ENCODE measurements at regions of chr4 and their contacts with region 1.

Region 1: GRCh38 chr4:15681207-15682015 is at the start of gene FAM200B:
- DNase-seq: peak; percentile 99
- H3K4me3 Mint-ChIP-seq: peak within 1 kb of the TSS; percentile 99
- H3K27ac Mint-ChIP-seq: peak within 1 kb of the TSS; percentile 95
- H3K4me1 Mint-ChIP-seq: peaks cover 29% of the 10 kb centered on the region
- H3K27me3 Mint-ChIP-seq: no peaks in the 10 kb centered on the region
- total RNA-seq, gene FAM200B: 8.3 to 8.9 TPM

Region 2: GRCh38 chr4:15702941-15703403 is 21.6 kb after region 1 on chr4 and contains the start of gene BST1:
- CTCF ChIA-PET with region 1: interaction called, 3 read pairs
- POLR2A ChIA-PET with region 1: no interaction called
- intact Hi-C with region 1: loop called (anchors 1 kb)
- DNase-seq: peak; percentile 67
- H3K4me3 Mint-ChIP-seq: peak within 1 kb of the TSS; percentile 77
- H3K27ac Mint-ChIP-seq: no peak within 1 kb of the TSS
- H3K4me1 Mint-ChIP-seq: peaks cover 7% of the 10 kb centered on the region
- H3K27me3 Mint-ChIP-seq: peaks cover 3% of the 10 kb centered on the region
- total RNA-seq, gene BST1: 0.19 to 0.67 TPM

Region 3: DNA sequence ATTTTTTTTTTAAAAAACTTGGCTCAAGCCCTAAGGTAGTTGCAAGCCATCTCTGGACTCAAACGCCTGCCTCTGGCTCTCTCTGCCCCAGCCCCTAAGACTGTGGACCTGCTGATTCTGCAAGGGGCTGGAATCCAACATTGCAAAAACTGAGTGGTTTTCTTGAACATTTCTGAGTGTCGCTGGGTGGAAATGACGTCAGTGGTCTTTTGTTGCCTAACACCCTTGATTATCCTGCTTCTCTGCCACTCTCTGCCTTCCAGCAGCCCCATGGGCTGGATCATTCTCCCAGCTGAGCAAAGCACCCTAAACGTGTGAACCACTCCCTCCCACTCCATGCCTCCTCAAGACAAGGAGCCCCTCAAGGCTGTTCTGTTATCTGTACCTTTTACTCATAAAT is 38.1 kb after region 1 on chr4:
- CTCF ChIA-PET with region 1: no interaction called
- POLR2A ChIA-PET with region 1: no interaction called
- intact Hi-C with region 1: no loop called
- DNase-seq: no peak
- H3K4me3 Mint-ChIP-seq: no peak overlapping the region
- H3K27ac Mint-ChIP-seq: no peak overlapping the region
- H3K4me1 Mint-ChIP-seq: no peaks in the 10 kb centered on the region
- H3K27me3 Mint-ChIP-seq: no peaks in the 10 kb centered on the region

Region 4: GRCh38 chr4:16067515-16067914 is 386.1 kb after region 1 on chr4:
- CTCF ChIA-PET with region 1: no interaction called
- POLR2A ChIA-PET with region 1: no interaction called
- intact Hi-C with region 1: no loop called
- DNase-seq: no peak
- H3K4me3 Mint-ChIP-seq: no peak overlapping the region
- H3K27ac Mint-ChIP-seq: no peak overlapping the region
- H3K4me1 Mint-ChIP-seq: peaks cover 4% of the 10 kb centered on the region
- H3K27me3 Mint-ChIP-seq: peaks cover 26% of the 10 kb centered on the region